CD4-positive, alpha-beta T cell (primary cell): ENCODE measurements at regions of chr1 and their contacts with region 1.

Region 1: DNA sequence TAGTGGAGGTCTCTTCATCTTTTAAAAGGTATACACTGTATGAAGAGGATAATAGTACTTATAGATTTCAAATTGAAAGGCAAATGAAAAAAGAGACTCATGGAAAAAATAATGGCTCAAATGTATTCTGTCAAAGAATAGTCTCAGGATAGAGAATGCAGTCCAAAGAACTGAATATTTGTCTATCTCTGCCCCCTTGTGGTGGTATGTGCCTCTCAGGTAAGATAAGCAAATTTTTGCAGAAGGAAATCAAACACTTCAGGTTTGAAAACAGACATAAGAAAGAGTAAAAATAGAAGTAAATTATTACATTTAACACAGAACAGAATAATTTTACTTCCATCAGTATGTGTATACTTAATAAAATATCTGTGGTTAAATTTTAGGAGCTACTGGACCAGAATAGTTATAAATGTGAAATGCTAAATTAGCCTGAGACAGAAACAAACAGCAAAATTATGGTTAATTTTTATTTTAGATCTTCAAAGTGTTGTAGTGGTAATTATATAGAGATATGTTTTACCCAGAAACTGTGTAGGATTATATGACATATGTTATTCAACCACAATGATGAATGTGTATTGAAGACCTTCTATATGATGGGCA is 164.4 kb upstream of the PALMD start:
- DNase-seq: peak in 10 of 14 experiments; percentile 2 to 65 (median 21)
- ATAC-seq: no peak
- H3K4me3 ChIP-seq: no peak overlapping the region
- H3K4me3 Mint-ChIP-seq: no peak overlapping the region
- H3K27ac ChIP-seq: no peak overlapping the region
- H3K27ac Mint-ChIP-seq: no peak overlapping the region
- H3K4me1 ChIP-seq: no peaks in the 10 kb centered on the region
- H3K4me1 Mint-ChIP-seq: no peaks in the 10 kb centered on the region
- H3K27me3 ChIP-seq: no peaks in the 10 kb centered on the region
- H3K27me3 Mint-ChIP-seq: peaks cover 20% of the 10 kb centered on the region
- CTCF ChIP-seq: peak; percentile 74

Region 2: DNA sequence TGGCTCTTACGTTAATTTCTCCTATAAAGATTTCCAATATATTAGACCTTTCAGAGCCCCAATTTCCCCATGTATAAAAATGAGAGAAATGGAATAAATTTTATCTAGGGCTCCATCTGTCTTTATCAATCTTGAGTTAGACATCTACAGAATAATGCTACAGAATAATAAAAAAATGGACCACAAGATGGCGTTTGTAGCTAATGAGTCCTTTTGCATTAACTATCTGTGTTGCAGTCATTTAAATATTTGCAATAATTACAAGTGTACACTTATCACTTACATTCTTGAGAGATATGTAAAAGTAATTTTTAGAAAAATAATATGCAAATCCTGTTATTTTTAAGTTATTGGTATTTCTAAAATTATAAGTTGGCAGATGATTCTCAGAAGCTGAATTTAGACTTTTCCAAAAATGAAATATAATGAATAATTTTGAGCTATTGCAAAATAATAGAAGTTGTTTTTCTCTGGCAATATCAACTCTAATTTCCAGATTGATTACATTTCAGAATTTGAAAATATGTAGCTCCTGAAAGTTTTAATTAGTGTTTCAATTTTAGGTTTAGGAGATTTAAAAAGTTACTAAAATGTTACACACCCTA is 732.2 kb before region 1 on chr1:
- CTCF ChIA-PET with region 1: interaction called, 6 read pairs
- POLR2A ChIA-PET with region 1: no interaction called
- intact Hi-C with region 1: loop called (anchors 1 to 2 kb)
- DNase-seq: peak in 3 of 14 experiments; percentile 33 to 37 (median 36)
- ATAC-seq: no peak
- H3K4me3 ChIP-seq: no peak overlapping the region
- H3K4me3 Mint-ChIP-seq: no peak overlapping the region
- H3K27ac ChIP-seq: no peak overlapping the region
- H3K27ac Mint-ChIP-seq: no peak overlapping the region
- H3K4me1 ChIP-seq: no peaks in the 10 kb centered on the region
- H3K4me1 Mint-ChIP-seq: no peaks in the 10 kb centered on the region
- H3K27me3 ChIP-seq: no peaks in the 10 kb centered on the region
- H3K27me3 Mint-ChIP-seq: peaks cover 5% of the 10 kb centered on the region
- CTCF ChIP-seq: peak; percentile 59

Region 3: DNA sequence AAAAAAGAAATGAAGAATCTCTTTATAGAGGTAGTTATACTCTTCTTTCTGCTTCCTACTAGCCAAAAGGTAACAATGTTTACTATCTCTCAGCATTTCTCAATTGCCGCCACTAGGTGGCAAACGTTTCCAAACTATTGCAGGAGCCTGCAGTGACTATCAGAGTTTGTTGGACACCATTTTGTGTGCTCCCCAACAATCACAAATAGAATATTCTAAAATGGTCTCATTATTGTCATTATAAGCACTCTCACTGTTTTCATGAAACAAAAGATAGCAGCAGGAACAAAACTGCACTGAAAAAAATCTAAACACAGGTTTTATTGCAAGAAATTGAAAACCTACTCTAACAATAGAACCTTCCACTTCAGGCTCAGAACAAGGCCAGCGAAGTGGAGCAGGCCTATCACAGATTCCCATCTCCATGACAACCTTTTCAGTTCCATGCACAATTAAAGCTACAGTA is 301.1 kb before region 1 on chr1:
- CTCF ChIA-PET with region 1: no interaction called
- POLR2A ChIA-PET with region 1: no interaction called
- intact Hi-C with region 1: loop called in 1 of 2 experiments (anchors 5 kb)
- DNase-seq: peak; percentile 21 to 77 (median 43)
- ATAC-seq: peak; percentile 80
- H3K4me3 ChIP-seq: no peak overlapping the region
- H3K4me3 Mint-ChIP-seq: no peak overlapping the region
- H3K27ac ChIP-seq: no peak overlapping the region
- H3K27ac Mint-ChIP-seq: no peak overlapping the region
- H3K4me1 ChIP-seq: no peaks in the 10 kb centered on the region
- H3K4me1 Mint-ChIP-seq: no peaks in the 10 kb centered on the region
- H3K27me3 ChIP-seq: no peaks in the 10 kb centered on the region
- H3K27me3 Mint-ChIP-seq: no peaks in the 10 kb centered on the region
- CTCF ChIP-seq: peak; percentile 90

Region 4: GRCh38 chr1:99207216-99207615 is 274.3 kb before region 1 on chr1:
- CTCF ChIA-PET with region 1: no interaction called
- POLR2A ChIA-PET with region 1: no interaction called
- intact Hi-C with region 1: no loop called
- DNase-seq: no peak
- ATAC-seq: no peak
- H3K4me3 ChIP-seq: no peak overlapping the region
- H3K4me3 Mint-ChIP-seq: no peak overlapping the region
- H3K27ac ChIP-seq: no peak overlapping the region
- H3K27ac Mint-ChIP-seq: no peak overlapping the region
- H3K4me1 ChIP-seq: no peaks in the 10 kb centered on the region
- H3K4me1 Mint-ChIP-seq: no peaks in the 10 kb centered on the region
- H3K27me3 ChIP-seq: no peaks in the 10 kb centered on the region
- H3K27me3 Mint-ChIP-seq: peaks cover 4% of the 10 kb centered on the region
- CTCF ChIP-seq: no peak

Region 5: DNA sequence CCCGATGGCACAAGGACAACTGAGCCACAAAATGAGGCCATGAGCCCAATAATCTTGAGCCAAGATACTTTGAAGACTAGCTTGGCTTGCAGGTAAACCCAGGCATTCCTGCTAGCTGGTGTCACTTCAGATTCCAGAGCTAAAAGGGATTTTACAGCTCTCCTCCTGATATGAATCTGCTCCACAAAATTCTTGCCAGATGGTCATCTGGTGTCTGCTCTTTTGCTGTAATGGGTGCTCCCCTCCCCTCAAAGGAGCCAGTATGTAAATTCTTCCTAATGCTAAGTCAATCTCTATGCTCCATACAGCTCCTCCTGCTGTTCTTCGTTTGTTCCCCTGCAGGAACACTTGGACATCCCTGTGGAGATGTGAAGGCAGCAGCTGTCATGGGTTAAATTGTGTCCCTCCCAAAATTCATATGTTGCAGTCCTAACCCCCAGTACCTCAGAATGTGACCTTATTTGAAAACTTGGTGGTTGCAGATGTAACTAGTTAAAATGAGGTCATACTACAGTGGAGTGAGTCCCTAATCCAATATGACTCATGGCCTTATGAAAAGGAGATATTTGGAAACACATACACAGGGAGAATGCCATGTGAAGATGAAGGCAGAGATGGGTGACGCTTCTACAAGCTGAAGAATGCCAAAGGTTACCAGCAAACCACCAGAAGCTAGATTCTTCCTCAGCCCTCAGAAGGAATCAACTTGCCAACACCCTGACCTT is 16.2 kb before region 1 on chr1:
- CTCF ChIA-PET with region 1: no interaction called
- POLR2A ChIA-PET with region 1: no interaction called
- intact Hi-C with region 1: no loop called
- DNase-seq: no peak
- ATAC-seq: no peak
- H3K4me3 ChIP-seq: no peak overlapping the region
- H3K4me3 Mint-ChIP-seq: no peak overlapping the region
- H3K27ac ChIP-seq: no peak overlapping the region
- H3K27ac Mint-ChIP-seq: no peak overlapping the region
- H3K4me1 ChIP-seq: no peaks in the 10 kb centered on the region
- H3K4me1 Mint-ChIP-seq: no peaks in the 10 kb centered on the region
- H3K27me3 ChIP-seq: no peaks in the 10 kb centered on the region
- H3K27me3 Mint-ChIP-seq: peaks cover 6% of the 10 kb centered on the region
- CTCF ChIP-seq: no peak